ENCODE measurements at regions of chr1 and their contacts with region 1.

Region 1: GRCh38 chr1:156910309-156910782 is 10.1 kb upstream of the LRRC71 start:
- DNase-seq: peak; percentile 82
- ATAC-seq: peak; percentile 71
- H3K4me3 Mint-ChIP-seq: peak overlapping the region; percentile 67
- H3K27ac Mint-ChIP-seq: no peak overlapping the region
- H3K4me1 Mint-ChIP-seq: peaks cover 17% of the 10 kb centered on the region
- H3K27me3 Mint-ChIP-seq: peaks cover 17% of the 10 kb centered on the region
- CTCF ChIP-seq: peak; percentile 98

Region 2: DNA sequence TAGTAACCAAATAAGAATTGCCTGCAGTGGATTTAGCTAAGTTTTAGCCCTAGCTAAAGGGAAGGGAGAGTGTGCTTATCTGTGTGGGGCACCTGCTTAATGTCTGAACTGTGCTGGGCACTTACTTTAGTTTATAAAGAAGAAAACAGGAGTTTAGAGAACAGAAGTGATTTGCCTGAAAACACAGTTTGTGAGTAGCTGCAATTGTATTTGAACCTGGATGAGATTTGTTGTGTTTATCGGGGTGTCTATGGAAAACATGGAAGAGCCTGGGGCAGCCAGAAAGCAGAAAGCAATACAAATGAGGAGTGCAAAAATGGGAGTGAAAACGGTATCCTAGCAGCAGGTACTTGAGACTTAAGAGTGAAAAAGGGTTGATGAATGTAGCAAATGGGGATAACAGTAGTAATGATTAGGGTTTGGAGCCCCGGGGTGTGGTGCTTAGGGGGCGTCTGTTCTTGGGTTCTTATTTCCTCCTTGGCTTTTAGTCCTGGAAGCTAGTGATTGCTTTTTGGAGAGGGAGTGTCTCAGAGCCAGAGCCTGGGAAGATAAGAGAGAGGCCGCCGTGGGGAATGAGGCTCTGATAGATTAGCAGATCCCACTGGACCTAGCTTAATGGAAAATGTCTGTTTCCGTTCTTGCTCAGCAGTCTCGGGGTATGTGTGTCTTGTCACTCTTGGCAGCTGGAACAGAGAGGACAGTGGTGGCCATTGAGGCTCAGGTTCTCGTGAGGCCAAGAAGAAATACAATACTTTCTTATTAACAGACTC is 137.4 kb before region 1 on chr1:
- CTCF ChIA-PET with region 1: no interaction called
- POLR2A ChIA-PET with region 1: no interaction called
- DNase-seq: no peak
- ATAC-seq: no peak
- H3K4me3 Mint-ChIP-seq: no peak overlapping the region
- H3K27ac Mint-ChIP-seq: peak overlapping the region; percentile 46; the same call in 1 of the 2 replicates
- H3K4me1 Mint-ChIP-seq: peaks cover 27% of the 10 kb centered on the region
- H3K27me3 Mint-ChIP-seq: no peaks in the 10 kb centered on the region
- CTCF ChIP-seq: no peak

Region 3: GRCh38 chr1:156898161-156898566 is 12.2 kb before region 1 on chr1:
- CTCF ChIA-PET with region 1: interaction called, 42 read pairs
- POLR2A ChIA-PET with region 1: no interaction called
- DNase-seq: no peak
- ATAC-seq: no peak
- H3K4me3 Mint-ChIP-seq: no peak overlapping the region
- H3K27ac Mint-ChIP-seq: no peak overlapping the region
- H3K4me1 Mint-ChIP-seq: peaks cover 20% of the 10 kb centered on the region
- H3K27me3 Mint-ChIP-seq: peaks cover 37% of the 10 kb centered on the region
- CTCF ChIP-seq: no peak